Transverse colon (tissue), 4 donors: ENCODE measurements at regions of chr18 and their contacts with region 1.

Region 1: GRCh38 chr18:5662586-5663090 is 118.8 kb upstream of the EPB41L3 start:
- DNase-seq: no peak
- H3K4me3 ChIP-seq: no peak overlapping the region
- H3K27ac ChIP-seq: no peak overlapping the region
- H3K4me1 ChIP-seq: no peaks in the 10 kb centered on the region
- H3K27me3 ChIP-seq: no peaks in the 10 kb centered on the region
- CTCF ChIP-seq: no peak
- EP300 ChIP-seq: no peak
- POLR2A ChIP-seq: no peak

Region 2: GRCh38 chr18:5106730-5107129 is 555.9 kb before region 1 on chr18:
- in situ Hi-C with region 1: no loop called
- intact Hi-C with region 1: loop called (anchors 10 kb)
- DNase-seq: no peak
- H3K4me3 ChIP-seq: no peak overlapping the region
- H3K27ac ChIP-seq: no peak overlapping the region
- H3K4me1 ChIP-seq: no peaks in the 10 kb centered on the region
- H3K27me3 ChIP-seq: no peaks in the 10 kb centered on the region
- CTCF ChIP-seq: peak in 1 of 5 experiments; percentile 23
- EP300 ChIP-seq: no peak
- POLR2A ChIP-seq: no peak